Activated naive CD4-positive, alpha-beta T cell treated with anti-CD3 and anti-CD28 coated beads for 36 hours (primary cell): ENCODE measurements at regions of chr1 and their contacts with region 1.

Region 1: DNA sequence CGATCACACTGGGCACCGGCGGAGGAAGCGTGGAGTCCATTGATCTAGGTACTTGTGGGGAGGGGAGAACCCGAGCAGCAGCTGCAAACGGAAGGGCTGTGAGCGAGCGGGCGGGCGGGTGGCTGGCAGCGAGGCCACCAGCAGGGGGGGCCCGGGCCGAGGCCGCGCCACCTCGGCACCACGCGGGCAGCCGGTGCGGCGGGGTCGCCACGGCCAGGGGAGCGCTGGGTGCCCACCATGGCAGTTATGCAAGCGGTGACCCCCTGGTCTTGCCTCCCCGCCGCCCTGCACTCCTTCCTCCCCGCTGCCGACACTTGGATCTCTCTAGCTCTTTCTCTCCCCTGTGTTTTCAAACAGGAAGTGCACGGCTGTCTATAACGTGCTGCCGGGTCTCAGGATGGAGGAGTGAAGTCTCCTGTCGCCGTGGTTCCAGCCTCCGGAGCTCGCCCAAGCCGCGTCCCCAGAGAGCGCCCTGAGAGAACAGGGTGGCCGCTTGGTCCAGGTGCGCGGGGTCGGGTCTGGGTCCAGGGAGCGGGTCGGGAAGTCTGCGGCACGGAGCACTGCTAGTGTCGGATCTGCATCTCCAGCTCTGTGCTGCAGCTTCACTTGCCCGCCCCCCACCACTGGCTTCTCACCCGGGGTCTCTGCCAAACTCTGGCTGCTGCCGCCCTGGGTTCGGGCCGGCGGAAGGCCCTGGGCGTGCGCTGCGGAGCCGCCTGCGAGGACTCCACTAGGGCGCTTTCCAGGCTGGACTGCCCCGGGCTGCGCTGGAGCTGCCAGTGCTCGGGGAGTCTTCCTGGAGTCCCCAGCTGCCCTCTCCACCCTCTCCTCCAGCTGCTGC is 22.7 kb downstream of the LRRC8D start:
- DNase-seq: peak; percentile 86
- H3K4me3 Mint-ChIP-seq: peak overlapping the region; percentile 91
- H3K27ac Mint-ChIP-seq: peak overlapping the region; percentile 94
- H3K4me1 Mint-ChIP-seq: peaks cover 47% of the 10 kb centered on the region
- H3K27me3 Mint-ChIP-seq: no peaks in the 10 kb centered on the region

Region 2: GRCh38 chr1:89524369-89525168 is 318.9 kb before region 1 on chr1 and contains the start of gene LRRC8B:
- CTCF ChIA-PET with region 1: no interaction called
- intact Hi-C with region 1: loop called (anchors 5 kb)
- DNase-seq: peak; percentile 93
- H3K4me3 Mint-ChIP-seq: no peak within 1 kb of the TSS
- H3K27ac Mint-ChIP-seq: no peak within 1 kb of the TSS
- H3K4me1 Mint-ChIP-seq: peaks cover 34% of the 10 kb centered on the region
- H3K27me3 Mint-ChIP-seq: no peaks in the 10 kb centered on the region
- total RNA-seq, gene LRRC8B: 18.0 to 20.4 TPM

Region 3: GRCh38 chr1:89780721-89781120 is 62.8 kb before region 1 on chr1:
- CTCF ChIA-PET with region 1: interaction called, 9 read pairs
- intact Hi-C with region 1: loop called (anchors 1 kb)
- DNase-seq: peak; percentile 57
- H3K4me3 Mint-ChIP-seq: peak overlapping the region; percentile 39
- H3K27ac Mint-ChIP-seq: peak overlapping the region; percentile 88
- H3K4me1 Mint-ChIP-seq: peaks cover 49% of the 10 kb centered on the region
- H3K27me3 Mint-ChIP-seq: no peaks in the 10 kb centered on the region

Region 4: GRCh38 chr1:89855413-89856123 is 12.1 kb after region 1 on chr1:
- CTCF ChIA-PET with region 1: interaction called, 9 read pairs
- intact Hi-C with region 1: loop called (anchors 1 kb)
- DNase-seq: no peak
- H3K4me3 Mint-ChIP-seq: peak overlapping the region; percentile 44
- H3K27ac Mint-ChIP-seq: no peak overlapping the region
- H3K4me1 Mint-ChIP-seq: peaks cover 11% of the 10 kb centered on the region
- H3K27me3 Mint-ChIP-seq: no peaks in the 10 kb centered on the region

Region 5: GRCh38 chr1:89953072-89953626 is 109.6 kb after region 1 on chr1:
- CTCF ChIA-PET with region 1: no interaction called
- intact Hi-C with region 1: loop called (anchors 1 kb)
- DNase-seq: peak; percentile 66
- H3K4me3 Mint-ChIP-seq: no peak overlapping the region
- H3K27ac Mint-ChIP-seq: no peak overlapping the region
- H3K4me1 Mint-ChIP-seq: peaks cover 18% of the 10 kb centered on the region
- H3K27me3 Mint-ChIP-seq: no peaks in the 10 kb centered on the region

Region 6: DNA sequence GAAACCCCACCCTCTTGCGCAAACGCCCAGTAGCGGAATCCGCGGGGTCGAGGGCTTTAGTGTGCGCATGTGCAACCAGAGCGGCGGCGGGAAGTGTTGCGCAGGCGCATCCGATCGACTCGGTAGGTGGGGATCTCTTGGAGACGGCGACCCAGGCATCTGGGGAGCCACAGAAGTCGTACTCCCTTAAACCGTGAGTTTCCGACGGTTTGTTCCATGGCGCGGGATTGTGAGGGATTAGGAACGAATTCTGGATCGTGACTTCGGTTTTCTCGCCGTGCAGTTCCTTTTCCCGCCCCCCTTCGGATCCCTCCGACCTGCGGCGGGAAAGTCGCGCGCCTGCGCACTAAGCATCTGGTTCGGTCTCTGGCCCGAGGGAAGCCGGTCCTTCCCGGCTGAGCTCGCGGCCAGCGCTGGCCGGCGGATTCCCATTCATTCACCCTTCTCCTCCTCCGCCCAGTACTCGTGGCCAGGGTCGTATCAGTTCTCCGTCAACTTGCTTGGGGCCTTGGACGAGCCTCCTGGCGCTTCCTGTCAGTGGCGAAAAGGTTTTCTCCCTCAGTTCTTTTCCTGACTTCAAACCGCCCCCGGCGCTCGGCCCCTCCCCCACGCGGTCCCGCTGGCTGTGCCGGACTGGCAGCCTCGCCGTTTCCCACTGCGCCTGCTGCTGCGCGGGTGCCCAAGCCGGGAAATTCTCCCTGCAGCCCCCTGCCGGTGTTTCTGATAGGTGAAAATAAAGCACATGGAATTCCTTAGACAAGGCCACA is 1657.4 kb after region 1 on chr1 and contains the start of gene CDC7:
- CTCF ChIA-PET with region 1: no interaction called
- intact Hi-C with region 1: loop called (anchors 10 kb)
- DNase-seq: peak; percentile 87
- H3K4me3 Mint-ChIP-seq: no peak within 1 kb of the TSS
- H3K27ac Mint-ChIP-seq: no peak within 1 kb of the TSS
- H3K4me1 Mint-ChIP-seq: peaks cover 15% of the 10 kb centered on the region
- H3K27me3 Mint-ChIP-seq: no peaks in the 10 kb centered on the region
- total RNA-seq, gene CDC7: 27.0 TPM